HEK293 (cell line): ENCODE measurements at regions of chr11 and their contacts with region 1.

Region 1: DNA sequence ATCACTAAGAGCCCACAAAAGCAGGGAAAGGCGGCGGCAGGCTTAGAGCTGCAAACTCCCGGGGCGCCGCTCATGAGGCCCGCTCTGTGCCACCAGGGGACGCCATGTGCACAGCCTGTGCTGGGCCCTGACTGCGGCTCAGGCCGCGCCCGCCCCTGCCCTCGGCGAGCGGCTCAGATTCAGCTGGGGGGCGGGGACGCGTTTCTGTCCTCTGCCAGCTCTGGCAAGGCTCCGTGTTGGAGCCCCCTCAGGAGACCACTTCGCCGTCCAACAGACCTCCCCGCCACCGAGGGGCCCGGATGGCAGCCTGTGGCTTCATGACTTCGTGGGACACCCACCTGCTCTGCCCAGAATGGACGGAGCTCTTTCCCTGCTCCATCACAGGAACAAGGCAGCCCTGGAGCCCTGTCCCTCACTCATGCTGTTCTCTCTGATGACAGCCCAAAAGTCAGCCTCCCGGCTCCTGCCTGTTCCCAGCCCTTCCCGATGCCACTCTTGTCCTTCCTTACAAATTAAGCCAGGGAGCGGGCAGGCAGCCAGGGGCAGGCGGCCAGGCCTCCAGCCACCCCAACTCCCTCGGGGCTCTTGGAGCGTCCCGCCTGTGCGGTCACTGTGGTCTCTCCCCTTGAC is 69.1 kb downstream of the NAT10 start:
- H3K4me3 ChIP-seq: peak overlapping the region; percentile 17
- H3K27ac ChIP-seq: no peak overlapping the region; the same call in 1 of the 2 replicates
- H3K4me1 ChIP-seq: no peaks in the 10 kb centered on the region
- CTCF ChIP-seq: peak; percentile 96

Region 2: GRCh38 chr11:34044664-34045485 is 129.7 kb before region 1 on chr11:
- CTCF ChIA-PET with region 1: no interaction called
- POLR2A ChIA-PET with region 1: no interaction called
- H3K4me3 ChIP-seq: no peak overlapping the region
- H3K27ac ChIP-seq: no peak overlapping the region
- H3K4me1 ChIP-seq: no peaks in the 10 kb centered on the region
- CTCF ChIP-seq: no peak

Region 3: DNA sequence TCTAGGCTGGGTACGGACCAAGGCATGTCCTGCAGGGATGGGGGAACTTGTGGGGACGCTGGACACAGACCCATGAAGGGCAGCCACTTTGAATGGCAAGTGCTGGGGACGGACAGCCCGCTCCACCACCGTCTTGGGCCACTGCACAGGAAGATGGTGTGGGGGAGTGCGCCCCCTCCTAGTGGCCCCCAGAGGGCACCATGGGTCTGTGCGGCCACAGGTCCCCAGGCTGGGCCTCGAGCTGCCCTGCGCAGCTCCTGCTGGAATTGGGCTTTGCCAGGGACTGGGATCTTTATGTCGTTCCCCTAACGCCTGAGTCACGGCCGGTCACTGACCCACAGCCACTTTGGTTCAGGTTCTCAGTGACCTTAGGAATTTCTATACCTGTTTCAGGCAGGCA is 24.7 kb before region 1 on chr11:
- CTCF ChIA-PET with region 1: interaction called, 14 read pairs
- POLR2A ChIA-PET with region 1: interaction called, 3 read pairs
- H3K4me3 ChIP-seq: no peak overlapping the region
- H3K27ac ChIP-seq: no peak overlapping the region
- H3K4me1 ChIP-seq: no peaks in the 10 kb centered on the region
- CTCF ChIP-seq: peak; percentile 63; the same call in 1 of the 2 replicates

Region 4: DNA sequence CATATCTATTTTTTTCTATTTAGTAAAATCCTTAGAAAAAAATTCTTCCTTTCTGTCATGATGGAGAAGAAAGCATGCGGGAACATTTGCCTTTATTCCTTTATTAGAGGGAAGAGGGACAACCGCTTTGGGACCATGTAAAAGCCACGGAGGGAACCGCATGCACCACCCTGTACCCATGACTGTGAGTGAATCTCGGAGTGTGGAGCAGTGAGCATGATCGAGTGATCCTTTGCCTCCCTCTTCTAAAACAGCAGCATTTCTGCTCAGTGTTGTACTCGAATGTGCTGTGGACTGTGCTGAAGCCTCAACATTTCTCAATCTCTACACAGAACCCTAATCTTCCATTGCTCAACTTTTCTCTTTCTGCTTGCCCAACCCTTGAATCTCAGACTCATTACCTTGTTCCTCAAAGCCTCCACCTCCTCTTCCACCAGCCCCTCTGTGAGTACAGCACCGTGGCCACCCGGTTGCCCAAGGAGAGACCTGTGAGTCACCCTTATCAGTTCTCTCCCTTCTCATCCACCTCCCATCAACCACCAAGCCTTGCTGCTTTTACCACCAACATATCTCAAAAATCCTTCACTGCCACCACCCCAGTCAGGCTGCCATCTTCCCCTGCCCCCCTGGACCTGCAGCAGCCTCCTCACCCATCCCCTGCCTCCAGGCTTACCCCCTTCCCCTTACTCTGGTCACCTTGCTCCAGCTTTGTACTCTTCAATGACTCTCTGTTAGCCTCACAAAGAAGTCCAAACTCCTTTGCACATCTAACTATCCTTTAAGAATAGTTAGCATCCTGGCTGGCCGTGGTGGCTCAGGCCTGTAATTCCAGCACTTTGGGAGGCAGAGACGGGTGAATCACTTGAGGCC is 34.0 kb after region 1 on chr11:
- CTCF ChIA-PET with region 1: interaction called, 10 read pairs
- POLR2A ChIA-PET with region 1: no interaction called
- H3K4me3 ChIP-seq: no peak overlapping the region
- H3K27ac ChIP-seq: no peak overlapping the region
- H3K4me1 ChIP-seq: peaks cover under 1% of the 10 kb centered on the region; the same call in 1 of the 2 replicates
- CTCF ChIP-seq: no peak

Region 5: DNA sequence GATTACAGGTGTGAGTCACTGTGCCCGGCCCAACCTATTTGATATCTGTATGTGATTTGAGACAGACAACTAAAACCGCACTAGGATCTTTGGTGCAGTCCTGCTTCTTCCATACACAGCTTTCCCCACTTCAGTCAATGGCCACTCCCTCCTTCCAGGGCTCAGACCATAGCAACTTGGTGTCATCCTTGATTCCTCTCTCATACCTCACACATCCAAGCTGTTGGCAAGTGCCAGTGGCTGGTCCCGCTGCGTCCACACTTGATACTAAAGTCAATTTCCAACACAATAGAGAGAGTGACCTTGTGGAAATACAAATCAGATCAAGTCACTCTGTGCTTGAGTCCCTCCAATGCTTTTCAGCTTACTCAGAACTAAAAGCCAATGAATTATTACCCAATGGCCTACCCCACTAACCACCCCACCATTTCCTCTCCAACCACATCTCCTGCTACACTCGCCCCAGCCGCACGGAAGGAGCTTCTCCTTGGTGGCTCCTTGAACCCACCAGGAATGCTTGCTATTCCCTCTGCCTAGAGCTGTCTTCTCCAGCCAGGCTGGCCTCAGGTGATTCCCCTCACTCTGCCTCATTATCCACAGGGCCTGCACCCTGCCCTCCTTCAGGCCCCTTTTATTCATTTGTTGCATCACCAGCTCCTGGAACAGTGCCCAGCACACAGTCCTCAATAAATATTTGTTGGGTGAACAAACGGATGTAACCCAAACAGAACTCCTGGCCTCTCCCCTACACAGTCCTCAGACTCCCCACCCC is 170.4 kb after region 1 on chr11:
- CTCF ChIA-PET with region 1: interaction called, 19 read pairs
- POLR2A ChIA-PET with region 1: no interaction called
- H3K4me3 ChIP-seq: no peak overlapping the region
- H3K27ac ChIP-seq: no peak overlapping the region
- H3K4me1 ChIP-seq: peaks cover 13% of the 10 kb centered on the region
- CTCF ChIP-seq: no peak

Region 6: DNA sequence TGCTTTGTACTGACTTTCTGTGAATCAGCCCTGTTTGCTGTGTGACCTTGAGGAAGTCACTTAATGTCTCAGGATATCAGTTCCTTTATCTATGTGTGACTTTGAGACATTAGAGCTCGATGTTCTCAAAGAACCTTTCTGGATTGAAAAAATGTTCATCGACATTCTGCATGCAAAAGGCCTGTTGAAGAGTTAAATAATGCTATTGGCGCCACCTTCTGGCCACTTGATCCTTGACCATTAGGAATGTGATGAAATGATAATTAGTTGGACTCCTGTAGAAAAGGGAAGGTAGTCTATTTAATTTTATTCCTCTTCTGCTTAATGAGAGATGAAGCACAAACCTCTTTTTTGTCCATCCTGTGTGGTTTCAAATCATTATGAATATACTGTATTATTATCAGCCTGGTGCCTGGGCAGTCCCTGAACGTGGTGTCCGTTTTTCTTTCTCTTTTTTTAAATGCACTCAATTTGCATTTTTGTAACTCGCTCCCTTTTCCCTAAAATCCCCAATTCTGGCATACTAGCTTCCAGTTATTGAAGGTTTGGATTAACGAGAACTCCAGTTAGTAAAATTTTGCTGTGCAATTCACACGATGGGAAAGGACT is 318.4 kb after region 1 on chr11:
- CTCF ChIA-PET with region 1: interaction called, 15 read pairs
- POLR2A ChIA-PET with region 1: no interaction called
- H3K4me3 ChIP-seq: no peak overlapping the region
- H3K27ac ChIP-seq: no peak overlapping the region
- H3K4me1 ChIP-seq: no peaks in the 10 kb centered on the region
- CTCF ChIP-seq: no peak; the same call in 1 of the 2 replicates